HepG2 (cell line): ENCODE measurements at regions of chr17 and their contacts with region 1.

Region 1: DNA sequence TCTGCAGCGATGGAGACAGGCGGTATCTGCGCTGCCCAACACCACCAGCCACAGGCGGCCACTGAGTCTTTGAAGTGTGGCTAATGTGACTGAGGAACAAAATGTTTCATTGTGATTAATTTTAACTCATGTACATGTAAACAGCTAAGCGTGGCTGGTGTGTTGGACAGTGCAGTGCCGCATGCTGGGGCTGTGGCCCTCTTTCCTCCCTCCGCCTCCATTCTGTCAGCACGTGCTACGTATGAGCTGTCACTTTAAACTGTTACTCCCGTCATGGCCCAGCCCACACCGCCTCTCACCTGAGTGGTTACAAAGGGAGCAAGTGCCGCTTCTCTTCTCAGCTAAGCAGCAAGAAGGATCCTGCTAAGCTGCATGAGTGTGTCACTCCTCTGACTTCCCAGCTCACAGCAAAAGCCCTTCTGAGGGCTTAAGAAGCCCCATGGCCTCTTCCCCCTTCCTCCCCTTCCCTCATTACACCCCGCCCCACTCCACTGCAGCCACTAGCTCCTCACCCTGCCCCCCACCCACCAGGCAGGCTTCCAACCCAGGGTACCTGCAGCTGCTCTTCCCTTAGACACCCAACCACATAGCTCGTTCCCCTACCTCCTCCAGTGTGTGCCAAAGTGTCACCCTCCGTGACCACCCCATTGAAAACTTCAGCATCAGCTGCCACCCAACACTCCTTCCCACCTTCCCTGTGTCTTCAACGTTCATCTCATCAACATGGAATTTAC is 15.0 kb downstream of the HASPIN start:
- DNase-seq: no peak
- ATAC-seq: peak; percentile 44
- H3K4me3 ChIP-seq: peak overlapping the region in 1 of 3 experiments; percentile 55; a peak in 1 of 6 replicates
- H3K27ac ChIP-seq: no peak overlapping the region
- H3K4me1 ChIP-seq: peaks cover 60% of the 10 kb centered on the region
- H3K27me3 ChIP-seq: no peaks in the 10 kb centered on the region
- CTCF ChIP-seq: no peak
- EP300 ChIP-seq: no peak
- POLR2A ChIP-seq: no peak
- RAD21 ChIP-seq: no peak

Region 2: DNA sequence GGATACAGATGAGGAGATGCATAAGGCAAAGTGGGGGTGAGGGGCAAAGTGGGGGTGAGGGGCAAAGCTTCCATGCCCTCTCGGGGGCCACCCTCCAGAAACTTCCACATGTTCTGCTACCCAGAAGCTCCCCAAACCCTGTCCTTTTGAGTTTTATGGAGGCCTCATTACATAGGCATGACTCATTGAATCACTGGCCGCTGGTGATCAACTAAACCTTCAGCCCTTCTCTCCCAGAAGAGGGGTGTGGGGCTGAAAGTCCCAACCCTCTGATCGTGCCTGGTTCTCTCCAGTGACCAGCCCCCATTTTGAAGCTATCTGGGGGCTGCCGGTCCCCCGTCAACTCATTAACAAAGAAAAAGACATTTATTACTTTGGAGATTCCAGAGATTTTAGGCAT is 34.8 kb after region 1 on chr17:
- CTCF ChIA-PET with region 1: interaction called, 5 read pairs
- POLR2A ChIA-PET with region 1: no interaction called
- in situ Hi-C with region 1: no loop called
- intact Hi-C with region 1: loop called (anchors 5 kb)
- DNase-seq: no peak
- ATAC-seq: no peak; the same call in 2 of the 3 replicates
- H3K4me3 ChIP-seq: no peak overlapping the region
- H3K27ac ChIP-seq: no peak overlapping the region
- H3K4me1 ChIP-seq: peaks cover 41% of the 10 kb centered on the region
- H3K27me3 ChIP-seq: peaks cover 0 to 2% of the 10 kb centered on the region in 2 experiments; a peak in 1 of 5 replicates
- CTCF ChIP-seq: no peak
- EP300 ChIP-seq: no peak
- POLR2A ChIP-seq: no peak
- RAD21 ChIP-seq: no peak

Region 3: DNA sequence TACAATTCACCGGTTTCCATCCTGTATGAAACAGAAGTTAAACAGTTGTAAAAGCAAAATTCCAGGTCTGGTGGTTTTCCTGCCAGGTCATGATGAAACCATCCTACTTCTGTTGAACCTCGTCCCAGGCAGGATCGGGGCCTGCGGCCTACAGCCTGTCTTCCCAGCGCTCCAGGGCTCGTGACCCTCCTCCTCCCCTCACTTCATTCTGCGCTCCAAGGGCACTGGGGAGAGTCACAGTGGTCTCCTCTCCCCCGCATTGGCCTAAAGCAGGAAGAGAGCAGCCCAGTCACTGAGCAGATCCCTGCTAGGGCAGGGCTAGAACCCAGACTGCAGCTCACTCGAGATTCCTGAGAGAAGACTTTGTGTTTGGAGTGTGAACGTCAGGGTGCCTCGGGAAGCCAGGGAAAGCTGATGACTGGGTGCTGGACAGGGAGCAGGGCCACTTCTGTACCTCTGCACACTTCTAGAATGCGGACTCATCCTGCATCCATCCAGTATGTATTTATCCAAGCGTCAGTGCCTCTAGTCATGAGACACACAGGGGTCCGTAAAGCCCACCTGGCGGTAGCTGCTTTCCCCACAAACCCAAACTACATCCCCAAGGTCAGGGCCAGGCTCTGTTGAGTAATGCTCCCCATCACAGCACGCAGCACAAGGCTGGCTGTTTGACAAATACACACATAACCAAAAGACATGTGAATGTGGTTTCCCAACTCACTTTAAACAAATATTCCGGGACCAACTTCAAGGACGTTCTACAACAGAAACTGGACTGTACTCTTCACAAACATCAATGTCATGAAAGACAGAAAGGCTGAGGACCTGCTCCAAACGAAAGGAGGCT is 64.0 kb after region 1 on chr17:
- CTCF ChIA-PET with region 1: no interaction called
- POLR2A ChIA-PET with region 1: interaction called, 12 read pairs
- in situ Hi-C with region 1: no loop called
- intact Hi-C with region 1: no loop called
- DNase-seq: peak; percentile 100
- ATAC-seq: peak; percentile 81
- H3K4me3 ChIP-seq: peak overlapping the region in 2 of 3 experiments; percentile 8 to 52; a peak in 2 of 6 replicates
- H3K27ac ChIP-seq: peak overlapping the region; percentile 98
- H3K4me1 ChIP-seq: peaks cover 90% of the 10 kb centered on the region
- H3K27me3 ChIP-seq: no peaks in the 10 kb centered on the region
- CTCF ChIP-seq: peak; percentile 31; the same call in 1 of the 2 replicates
- EP300 ChIP-seq: peak; percentile 96 to 99
- POLR2A ChIP-seq: peak; percentile 51 to 70; a peak in 3 of 4 replicates
- RAD21 ChIP-seq: peak; percentile 20

Region 4: GRCh38 chr17:3827124-3827773 is 88.5 kb after region 1 on chr17:
- CTCF ChIA-PET with region 1: interaction called, 46 read pairs
- POLR2A ChIA-PET with region 1: interaction called, 4 read pairs
- in situ Hi-C with region 1: loop called (anchors 5 kb)
- intact Hi-C with region 1: loop called (anchors 1 kb)
- DNase-seq: peak; percentile 79
- ATAC-seq: peak; percentile 61
- H3K4me3 ChIP-seq: no peak overlapping the region
- H3K27ac ChIP-seq: no peak overlapping the region
- H3K4me1 ChIP-seq: no peaks in the 10 kb centered on the region; the same call in 1 of the 2 replicates
- H3K27me3 ChIP-seq: no peaks in the 10 kb centered on the region; a peak in 1 of 5 replicates
- CTCF ChIP-seq: peak; percentile 87
- EP300 ChIP-seq: no peak
- POLR2A ChIP-seq: no peak
- RAD21 ChIP-seq: peak; percentile 84

Region 5: DNA sequence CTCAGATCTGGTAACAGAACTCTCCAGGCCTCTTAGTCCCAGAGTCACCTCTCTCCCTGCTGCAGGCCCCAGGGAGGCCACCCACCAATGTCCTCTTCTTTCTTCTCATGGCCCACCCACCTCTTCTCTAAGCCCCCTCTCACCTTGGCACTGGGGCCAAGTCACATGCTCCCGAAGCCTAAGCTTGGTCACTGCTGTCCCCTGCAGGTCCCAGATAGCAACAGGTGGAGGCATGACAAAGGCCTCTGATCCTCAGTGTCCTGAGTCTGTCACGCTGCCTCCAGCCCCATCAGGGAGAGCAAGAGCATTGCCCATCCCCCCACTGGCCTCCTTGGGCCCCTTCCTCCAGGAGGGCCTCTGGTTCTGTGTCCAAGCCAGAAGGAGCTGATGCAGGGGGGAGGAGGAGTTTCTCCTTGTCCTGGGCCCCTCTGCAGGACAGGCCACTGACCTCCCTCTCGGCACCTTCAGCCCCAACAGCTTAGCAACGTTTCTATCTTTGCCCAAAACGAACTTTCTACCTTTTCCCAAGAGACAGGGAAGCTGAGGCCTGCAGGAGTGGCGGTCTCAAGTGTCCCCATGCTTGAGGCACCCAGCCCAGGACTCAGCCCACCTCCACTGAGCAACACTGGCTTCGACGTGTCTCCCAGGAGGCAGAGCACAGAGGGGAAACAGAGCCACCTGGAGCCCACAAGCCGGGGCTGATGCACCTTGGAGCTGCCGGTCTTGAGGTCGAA is 168.9 kb after region 1 on chr17:
- CTCF ChIA-PET with region 1: no interaction called
- POLR2A ChIA-PET with region 1: interaction called, 4 read pairs
- in situ Hi-C with region 1: loop called (anchors 10 kb)
- intact Hi-C with region 1: loop called (anchors 10 kb)
- DNase-seq: peak; percentile 36
- ATAC-seq: peak; percentile 67
- H3K4me3 ChIP-seq: no peak overlapping the region
- H3K27ac ChIP-seq: no peak overlapping the region
- H3K4me1 ChIP-seq: peaks cover 16% of the 10 kb centered on the region
- H3K27me3 ChIP-seq: peaks cover 7 to 36% of the 10 kb centered on the region in 2 experiments
- CTCF ChIP-seq: peak; percentile 91
- EP300 ChIP-seq: no peak
- POLR2A ChIP-seq: no peak
- RAD21 ChIP-seq: peak; percentile 74